ENCODE measurements at regions of chr13 and their contacts with region 1.

Region 1: DNA sequence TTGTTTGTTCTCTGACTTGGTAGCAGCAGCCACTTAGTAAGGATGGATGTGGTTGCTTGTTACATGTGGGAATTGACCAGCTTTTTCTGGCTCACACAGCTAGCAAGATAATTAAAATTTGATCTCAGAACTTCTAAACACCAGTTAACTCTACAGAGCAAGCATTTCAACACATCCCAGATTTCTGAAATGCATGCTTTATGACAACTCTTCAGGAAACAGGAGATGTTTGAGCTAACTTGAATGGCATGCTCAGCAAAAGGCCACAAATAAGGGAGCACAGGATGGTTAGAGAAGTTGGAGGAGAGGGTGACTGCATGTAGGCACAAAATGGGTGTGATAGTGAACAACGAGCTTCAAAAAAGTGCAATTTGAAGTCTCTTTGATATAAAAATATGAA is 167.1 kb upstream of the SPRY2 start:
- DNase-seq: no peak
- H3K4me3 ChIP-seq: no peak overlapping the region
- H3K27ac ChIP-seq: no peak overlapping the region
- H3K4me1 ChIP-seq: no peaks in the 10 kb centered on the region
- H3K27me3 ChIP-seq: no peaks in the 10 kb centered on the region
- CTCF ChIP-seq: no peak
- POLR2A ChIP-seq: no peak

Region 2: GRCh38 chr13:78777976-78778375 is 1730.1 kb before region 1 on chr13:
- intact Hi-C with region 1: no loop called
- DNase-seq: no peak
- H3K4me3 ChIP-seq: no peak overlapping the region
- H3K27ac ChIP-seq: no peak overlapping the region
- H3K4me1 ChIP-seq: no peaks in the 10 kb centered on the region
- H3K27me3 ChIP-seq: peaks cover 0 to 17% of the 10 kb centered on the region in 2 donors
- CTCF ChIP-seq: no peak
- POLR2A ChIP-seq: no peak

Region 3: DNA sequence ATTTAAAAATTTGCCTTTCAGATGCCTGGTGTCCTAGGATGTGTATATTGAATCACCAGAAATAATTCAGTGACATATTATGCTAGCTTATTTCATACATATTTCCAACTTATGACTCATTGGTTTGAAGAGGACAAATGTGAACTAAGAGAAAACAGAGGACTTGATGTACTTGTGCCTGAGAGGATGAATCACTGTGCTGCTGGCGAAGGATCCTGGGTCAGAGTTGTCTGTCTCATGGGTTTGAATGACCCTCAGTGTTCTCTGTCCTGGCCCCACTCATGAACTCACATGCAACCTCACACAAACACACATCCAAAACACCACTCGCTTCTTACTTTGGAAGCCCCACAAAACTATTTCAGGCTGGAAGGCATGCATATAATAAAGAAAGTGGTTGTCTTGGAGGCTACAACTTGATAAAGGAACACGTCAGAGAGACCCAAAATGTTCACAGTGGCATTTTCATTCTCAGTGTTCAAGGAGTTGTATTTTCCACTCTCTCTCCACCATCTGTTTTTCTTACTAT is 38.1 kb before region 1 on chr13:
- intact Hi-C with region 1: loop called (anchors 2 kb)
- DNase-seq: peak in 1 of 2 donors; percentile 85
- H3K4me3 ChIP-seq: no peak overlapping the region
- H3K27ac ChIP-seq: peak overlapping the region; percentile 83 to 97
- H3K4me1 ChIP-seq: peaks cover 7% of the 10 kb centered on the region in 2 donors
- H3K27me3 ChIP-seq: no peaks in the 10 kb centered on the region
- CTCF ChIP-seq: no peak
- POLR2A ChIP-seq: no peak